Lower leg skin (tissue), 4 donors: ENCODE measurements at regions of chr9 and their contacts with region 1.

Region 1: GRCh38 chr9:114413861-114414301 is 26.1 kb upstream of the AKNA start:
- DNase-seq: no peak
- H3K4me3 ChIP-seq: no peak overlapping the region
- CTCF ChIP-seq: no peak
- POLR2A ChIP-seq: no peak

Region 2: DNA sequence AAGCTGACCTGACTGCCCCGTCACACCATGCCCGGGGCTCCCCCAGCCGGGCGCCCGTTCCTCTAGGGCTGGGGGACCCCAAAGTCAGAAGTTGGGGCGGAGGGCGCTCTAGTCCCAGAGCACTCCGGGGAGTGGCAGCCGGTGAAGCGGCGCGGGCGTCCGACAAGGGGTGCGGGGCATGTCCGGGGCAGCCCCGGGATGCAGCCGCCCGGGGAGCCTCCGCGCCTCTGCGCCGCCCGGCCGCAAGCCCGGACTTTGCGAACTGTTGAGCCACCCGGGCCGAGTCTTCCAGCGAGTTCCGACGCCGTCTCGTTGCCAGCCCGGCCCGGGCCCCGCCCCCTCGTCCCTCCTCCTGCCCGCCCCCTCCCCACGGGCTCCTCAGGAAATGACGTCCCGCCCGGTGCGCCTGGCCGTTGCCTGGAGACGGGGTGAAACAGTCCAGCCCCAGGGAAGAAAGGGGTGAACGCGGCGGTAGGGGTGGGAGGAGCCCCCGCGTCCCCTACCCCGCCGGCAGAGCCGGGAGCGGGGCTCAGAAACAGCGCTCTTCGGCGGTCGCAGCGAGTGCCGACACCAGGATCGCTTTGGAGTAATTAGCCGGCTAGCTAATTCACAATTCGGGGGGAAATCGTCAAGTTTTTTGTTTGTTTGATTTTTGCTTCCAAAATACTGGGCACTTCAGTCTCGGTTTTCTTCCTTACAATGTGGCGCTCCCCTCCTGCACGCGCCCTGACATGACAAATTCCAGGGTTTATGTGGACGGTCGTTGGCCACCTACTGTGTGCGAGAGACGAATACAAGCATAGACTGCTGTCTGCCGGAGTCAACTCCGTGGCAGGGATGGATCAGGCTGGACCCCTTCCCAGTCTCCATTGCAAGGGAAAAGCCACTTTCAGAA is 91.6 kb after region 1 on chr9 and contains the start of gene WHRN:
- intact Hi-C with region 1: loop called (anchors 10 kb)
- DNase-seq: peak; percentile 88 to 98
- H3K4me3 ChIP-seq: peak within 1 kb of the TSS; percentile 59
- CTCF ChIP-seq: no peak
- POLR2A ChIP-seq: no peak
- total RNA-seq, gene WHRN: 8.7 to 15.0 (median 10.5) TPM